CD4-positive, alpha-beta T cell (primary cell): ENCODE measurements at regions of chr4 and their contacts with region 1.

Region 1: GRCh38 chr4:7052923-7053715 is 9.9 kb downstream of the TADA2B start:
- DNase-seq: peak in 3 of 14 experiments; percentile 16 to 44 (median 35)
- ATAC-seq: peak; percentile 54
- H3K4me3 ChIP-seq: no peak overlapping the region
- H3K4me3 Mint-ChIP-seq: no peak overlapping the region
- H3K27ac ChIP-seq: peak overlapping the region; percentile 29
- H3K27ac Mint-ChIP-seq: peak overlapping the region; percentile 77
- H3K4me1 ChIP-seq: peaks cover 49% of the 10 kb centered on the region
- H3K4me1 Mint-ChIP-seq: peaks cover 34% of the 10 kb centered on the region
- H3K27me3 ChIP-seq: no peaks in the 10 kb centered on the region
- H3K27me3 Mint-ChIP-seq: no peaks in the 10 kb centered on the region
- CTCF ChIP-seq: no peak

Region 2: GRCh38 chr4:6546681-6547447 is 506.3 kb before region 1 on chr4:
- CTCF ChIA-PET with region 1: no interaction called
- POLR2A ChIA-PET with region 1: no interaction called
- intact Hi-C with region 1: no loop called
- DNase-seq: peak in 13 of 14 experiments; percentile 12 to 83 (median 34)
- ATAC-seq: peak; percentile 68
- H3K4me3 ChIP-seq: no peak overlapping the region
- H3K4me3 Mint-ChIP-seq: no peak overlapping the region
- H3K27ac ChIP-seq: no peak overlapping the region
- H3K27ac Mint-ChIP-seq: no peak overlapping the region
- H3K4me1 ChIP-seq: no peaks in the 10 kb centered on the region
- H3K4me1 Mint-ChIP-seq: no peaks in the 10 kb centered on the region
- H3K27me3 ChIP-seq: peaks cover 23 to 29% of the 10 kb centered on the region in 2 experiments
- H3K27me3 Mint-ChIP-seq: peaks cover 62% of the 10 kb centered on the region
- CTCF ChIP-seq: peak; percentile 75

Region 3: DNA sequence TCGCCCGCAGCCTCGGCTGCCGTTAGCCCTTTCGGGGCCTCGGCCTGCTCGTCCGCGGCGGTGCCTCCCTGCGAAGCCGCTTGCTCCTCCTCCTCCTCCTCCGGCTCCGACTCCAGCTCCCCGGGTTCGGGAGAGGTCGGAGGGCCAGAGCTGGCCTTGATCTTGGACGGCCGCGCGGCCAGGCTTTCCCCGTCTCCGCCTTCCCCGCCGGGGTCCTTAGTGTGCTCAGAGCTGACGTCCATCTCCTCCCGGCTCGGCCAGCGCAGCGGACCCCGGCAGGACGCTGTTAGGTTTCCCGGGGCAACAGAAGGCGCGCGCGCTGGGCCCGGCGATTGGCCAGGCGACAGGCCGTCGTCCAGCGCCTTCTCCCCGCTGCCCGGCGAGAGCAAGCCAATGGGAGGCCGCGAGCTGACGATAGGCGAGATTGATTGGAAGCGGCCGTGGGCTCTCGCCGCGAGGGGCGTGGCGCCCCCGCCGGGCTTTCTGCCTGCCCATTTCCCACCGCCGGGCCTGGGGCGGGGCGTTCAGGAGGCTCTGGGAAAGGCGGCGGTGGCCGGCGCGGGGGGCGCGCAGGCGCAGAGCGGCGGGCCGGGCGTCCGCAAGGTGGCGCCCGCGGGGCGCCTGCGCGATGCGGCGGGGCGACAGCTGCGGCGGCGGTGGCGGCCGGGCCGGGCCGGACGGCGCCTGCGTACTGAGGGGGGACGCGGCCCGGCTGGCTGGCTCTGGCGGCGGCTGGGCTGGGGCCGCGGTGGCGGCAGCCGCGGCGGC is 10.2 kb before region 1 on chr4 and contains the start of gene TADA2B:
- CTCF ChIA-PET with region 1: interaction called, 5 read pairs
- POLR2A ChIA-PET with region 1: interaction called, 12 read pairs
- intact Hi-C with region 1: no loop called
- DNase-seq: peak; percentile 72 to 97 (median 89)
- ATAC-seq: peak; percentile 76
- H3K4me3 ChIP-seq: peak within 1 kb of the TSS; percentile 87
- H3K4me3 Mint-ChIP-seq: peak within 1 kb of the TSS; percentile 93
- H3K27ac ChIP-seq: peak within 1 kb of the TSS; percentile 44 to 81
- H3K27ac Mint-ChIP-seq: peak within 1 kb of the TSS; percentile 82
- H3K4me1 ChIP-seq: peaks cover 55% of the 10 kb centered on the region
- H3K4me1 Mint-ChIP-seq: peaks cover 57% of the 10 kb centered on the region
- H3K27me3 ChIP-seq: no peaks in the 10 kb centered on the region
- H3K27me3 Mint-ChIP-seq: no peaks in the 10 kb centered on the region
- CTCF ChIP-seq: peak; percentile 22
- total RNA-seq, gene TADA2B: 41.5 to 44.6 TPM

Region 4: GRCh38 chr4:7094916-7095315 is 41.8 kb after region 1 on chr4:
- CTCF ChIA-PET with region 1: no interaction called
- POLR2A ChIA-PET with region 1: no interaction called
- intact Hi-C with region 1: no loop called
- DNase-seq: no peak
- ATAC-seq: no peak
- H3K4me3 ChIP-seq: no peak overlapping the region
- H3K4me3 Mint-ChIP-seq: no peak overlapping the region
- H3K27ac ChIP-seq: no peak overlapping the region
- H3K27ac Mint-ChIP-seq: no peak overlapping the region
- H3K4me1 ChIP-seq: no peaks in the 10 kb centered on the region
- H3K4me1 Mint-ChIP-seq: no peaks in the 10 kb centered on the region
- H3K27me3 ChIP-seq: peaks cover 0 to 2% of the 10 kb centered on the region in 2 experiments
- H3K27me3 Mint-ChIP-seq: peaks cover 23% of the 10 kb centered on the region
- CTCF ChIP-seq: no peak